ENCODE measurements at regions of chr10 and their contacts with region 1.

Region 1: GRCh38 chr10:80356563-80356988 is at the starts of genes DYDC1 and DYDC2:
- DNase-seq: peak; percentile 69
- ATAC-seq: peak; percentile 91
- H3K4me3 Mint-ChIP-seq: peak within 1 kb of the TSS; percentile 57
- H3K27ac Mint-ChIP-seq: no peak within 1 kb of the TSS
- H3K4me1 Mint-ChIP-seq: peaks cover 10% of the 10 kb centered on the region
- H3K27me3 Mint-ChIP-seq: peaks cover 41% of the 10 kb centered on the region
- total RNA-seq, gene DYDC1: not detected
- total RNA-seq, gene DYDC2: not detected

Region 2: DNA sequence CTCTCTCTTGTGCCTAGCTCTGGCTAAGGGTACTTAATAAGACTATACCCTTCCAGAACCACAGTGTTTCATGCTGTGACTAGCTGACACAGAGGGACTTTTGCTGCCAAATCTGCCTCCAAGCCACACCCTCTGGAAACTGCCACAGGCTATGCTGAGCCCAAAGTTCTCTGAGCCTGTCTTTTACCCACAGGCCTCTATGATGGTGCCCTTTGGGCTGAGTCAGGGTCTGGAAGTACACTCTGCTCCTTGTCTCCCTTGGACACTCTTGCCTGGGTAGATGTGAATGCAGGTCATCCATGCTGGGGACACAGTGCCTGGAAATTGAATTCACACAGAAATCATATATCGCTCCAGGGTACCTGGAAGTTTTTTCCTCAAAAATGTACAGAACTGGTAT is 22.6 kb before region 1 on chr10:
- CTCF ChIA-PET with region 1: no interaction called
- POLR2A ChIA-PET with region 1: no interaction called
- DNase-seq: no peak
- ATAC-seq: no peak
- H3K4me3 Mint-ChIP-seq: no peak overlapping the region
- H3K27ac Mint-ChIP-seq: no peak overlapping the region
- H3K4me1 Mint-ChIP-seq: no peaks in the 10 kb centered on the region
- H3K27me3 Mint-ChIP-seq: peaks cover 12% of the 10 kb centered on the region

Region 3: DNA sequence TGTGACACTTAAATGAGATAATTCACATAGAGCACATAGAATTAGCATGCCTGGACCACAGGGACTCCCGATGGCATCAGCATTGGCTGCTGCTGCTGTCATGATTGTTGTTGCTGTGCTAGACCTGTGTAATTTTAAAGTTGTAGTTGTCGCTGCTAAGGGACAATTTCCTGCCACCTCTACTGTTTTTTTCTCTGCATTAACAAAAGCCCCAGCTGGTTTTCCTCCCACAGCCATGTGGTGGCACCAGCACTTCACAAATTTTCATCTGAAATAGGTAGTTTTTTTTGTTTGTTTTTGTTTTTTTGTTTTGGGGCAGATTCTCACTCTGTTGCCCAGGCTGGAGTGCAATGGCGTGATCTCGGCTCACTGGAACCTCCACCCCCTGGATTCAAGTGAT is 26.4 kb after region 1 on chr10:
- CTCF ChIA-PET with region 1: interaction called, 10 read pairs
- POLR2A ChIA-PET with region 1: no interaction called
- DNase-seq: peak; percentile 76
- ATAC-seq: peak; percentile 68
- H3K4me3 Mint-ChIP-seq: no peak overlapping the region
- H3K27ac Mint-ChIP-seq: no peak overlapping the region
- H3K4me1 Mint-ChIP-seq: peaks cover 14% of the 10 kb centered on the region
- H3K27me3 Mint-ChIP-seq: peaks cover 12% of the 10 kb centered on the region